Activated T-helper 2 cell treated with anti-CD3 and anti-CD28 coated beads, Interferon-gamma antibody, Interleukin-2, Interleukin-4, amounts not matched to agents 10 μg/mL and 5 μg/mL and 100 μg/mL, durations not matched to agents 14 hours and 24 hours and 36 hours (primary cell): ENCODE measurements at regions of chr1 and their contacts with region 1.

Region 1: GRCh38 chr1:61049850-61050540 is 32.4 kb upstream of the NFIA start:
- DNase-seq: peak; percentile 73
- H3K4me3 Mint-ChIP-seq: peak overlapping the region; percentile 42
- H3K27ac Mint-ChIP-seq: no peak overlapping the region
- H3K4me1 Mint-ChIP-seq: peaks cover 11% of the 10 kb centered on the region
- H3K27me3 Mint-ChIP-seq: peaks cover 56% of the 10 kb centered on the region

Region 2: DNA sequence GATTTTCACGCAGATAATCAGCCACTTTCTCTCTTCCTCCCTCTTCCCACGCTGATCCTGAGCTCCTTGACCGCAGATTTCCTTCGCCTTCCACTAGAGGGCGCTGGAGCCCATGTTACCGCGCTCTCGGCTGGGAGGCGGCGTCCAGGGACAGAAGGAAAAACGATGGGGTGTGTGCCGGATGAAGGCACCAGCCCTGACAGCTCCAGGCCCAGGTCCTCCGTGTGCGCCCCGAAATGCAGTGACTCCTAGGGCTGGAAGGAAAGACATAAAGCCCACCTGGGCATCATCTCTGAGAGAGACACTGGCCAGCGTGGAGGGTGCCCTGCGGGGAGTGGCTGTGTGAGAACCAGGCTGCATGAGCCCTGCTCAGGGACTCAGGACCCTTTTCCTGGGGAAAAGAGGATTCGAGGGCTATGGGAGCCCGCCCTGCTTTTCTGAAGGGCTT is 1078.5 kb before region 1 on chr1:
- intact Hi-C with region 1: loop called (anchors 10 kb)
- DNase-seq: peak; percentile 19
- H3K4me3 Mint-ChIP-seq: no peak overlapping the region
- H3K27ac Mint-ChIP-seq: no peak overlapping the region
- H3K4me1 Mint-ChIP-seq: no peaks in the 10 kb centered on the region
- H3K27me3 Mint-ChIP-seq: peaks cover 27% of the 10 kb centered on the region

Region 3: GRCh38 chr1:61077676-61078541 is 27.9 kb after region 1 on chr1:
- intact Hi-C with region 1: loop called (anchors 1 kb)
- DNase-seq: peak; percentile 82
- H3K4me3 Mint-ChIP-seq: peak overlapping the region; percentile 87
- H3K27ac Mint-ChIP-seq: peak overlapping the region; percentile 80
- H3K4me1 Mint-ChIP-seq: peaks cover 38% of the 10 kb centered on the region
- H3K27me3 Mint-ChIP-seq: peaks cover 43% of the 10 kb centered on the region

Region 4: GRCh38 chr1:61337981-61338848 is 288.2 kb after region 1 on chr1:
- intact Hi-C with region 1: loop called (anchors 10 kb)
- DNase-seq: no peak
- H3K4me3 Mint-ChIP-seq: no peak overlapping the region
- H3K27ac Mint-ChIP-seq: no peak overlapping the region
- H3K4me1 Mint-ChIP-seq: no peaks in the 10 kb centered on the region
- H3K27me3 Mint-ChIP-seq: peaks cover 49% of the 10 kb centered on the region

Region 5: DNA sequence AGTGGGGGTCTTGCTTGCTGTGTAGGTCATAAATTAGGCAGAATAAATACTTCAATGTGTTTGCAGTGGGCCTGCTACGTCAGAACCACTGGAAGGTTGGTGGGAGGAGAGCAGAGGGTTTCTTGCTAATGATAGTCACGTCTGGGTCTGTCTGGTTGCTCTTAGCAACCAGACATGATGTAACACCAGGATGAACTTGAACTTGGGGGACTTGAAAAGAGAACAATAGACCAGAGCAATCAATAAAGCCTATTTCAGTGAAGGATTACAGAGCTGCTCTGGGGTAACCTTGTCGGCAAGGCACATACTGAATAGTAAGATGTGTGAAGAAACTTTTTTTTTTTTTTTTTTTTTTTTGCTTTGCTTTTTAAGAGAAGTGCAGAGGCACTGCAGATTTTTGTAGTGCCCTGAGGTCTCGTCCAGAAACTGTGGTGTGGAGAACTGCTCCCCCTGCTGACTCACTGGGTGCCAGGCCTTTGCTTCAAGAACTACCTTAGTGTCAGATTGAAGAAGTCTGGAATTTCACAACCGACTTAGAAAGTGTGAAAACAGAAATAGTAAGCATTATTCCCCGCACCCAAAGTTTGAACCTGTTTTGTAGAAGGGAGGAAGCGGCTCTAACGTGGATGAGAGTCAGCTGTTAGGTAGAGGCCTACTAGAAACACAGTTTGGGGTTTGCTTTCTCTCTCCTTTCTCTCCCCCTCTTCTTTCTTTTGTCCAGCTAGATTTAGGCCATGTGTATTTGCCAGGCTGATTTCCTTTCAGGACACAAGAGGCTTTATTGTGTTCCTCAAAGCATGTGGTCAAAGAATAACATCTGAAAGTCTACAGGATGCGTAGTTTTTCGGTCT is 403.3 kb after region 1 on chr1:
- intact Hi-C with region 1: loop called (anchors 1 kb)
- DNase-seq: peak; percentile 35
- H3K4me3 Mint-ChIP-seq: no peak overlapping the region
- H3K27ac Mint-ChIP-seq: no peak overlapping the region
- H3K4me1 Mint-ChIP-seq: no peaks in the 10 kb centered on the region
- H3K27me3 Mint-ChIP-seq: peaks cover 6% of the 10 kb centered on the region

Region 6: GRCh38 chr1:61588736-61589672 is 539.0 kb after region 1 on chr1:
- intact Hi-C with region 1: loop called (anchors 10 kb)
- DNase-seq: peak; percentile 36
- H3K4me3 Mint-ChIP-seq: no peak overlapping the region
- H3K27ac Mint-ChIP-seq: no peak overlapping the region
- H3K4me1 Mint-ChIP-seq: no peaks in the 10 kb centered on the region
- H3K27me3 Mint-ChIP-seq: peaks cover 3% of the 10 kb centered on the region